A549 (cell line): ENCODE measurements at regions of chr16 and their contacts with region 1.

Region 1: DNA sequence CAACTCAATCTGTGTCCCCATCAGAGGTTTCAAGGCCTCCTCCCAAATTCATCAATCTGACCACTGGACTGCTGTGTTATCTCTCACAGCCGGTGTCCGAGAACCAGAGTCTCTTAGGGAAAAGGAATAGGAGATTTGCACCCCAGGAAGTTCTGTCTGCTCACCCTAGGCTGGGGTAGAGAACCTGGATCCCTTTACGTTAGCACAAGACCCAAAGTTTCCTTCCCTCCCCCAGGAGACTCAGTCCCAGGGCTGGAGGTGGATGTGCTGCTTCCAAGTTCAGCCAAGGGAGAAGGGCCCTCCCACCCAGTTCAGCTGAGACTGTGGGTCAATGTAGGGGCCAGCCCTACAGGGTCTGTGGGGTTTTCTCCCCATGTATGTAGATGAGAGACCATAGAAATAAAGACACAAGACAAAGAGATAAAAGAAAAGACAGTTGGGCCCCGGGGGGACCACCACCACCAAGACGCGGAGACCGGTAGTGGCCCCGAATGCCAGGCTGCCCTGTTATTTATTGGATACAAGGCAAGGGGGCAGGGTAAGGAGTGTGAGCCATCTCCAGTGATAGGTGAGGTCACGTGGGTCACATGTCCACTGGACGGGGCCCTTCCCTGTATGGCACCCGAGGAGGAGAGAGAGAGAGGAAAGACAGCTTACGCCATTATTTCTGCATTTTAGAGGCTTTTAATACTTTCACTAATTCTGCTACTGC is 22.7 kb upstream of the OR1F1 start:
- DNase-seq: no peak
- ATAC-seq: no peak
- H3K4me3 ChIP-seq: peak overlapping the region; percentile 26; the same call in 1 of the 3 replicates
- H3K27ac ChIP-seq: peak overlapping the region; percentile 76 to 81
- H3K4me1 ChIP-seq: peaks cover 3% of the 10 kb centered on the region; the same call in 2 of the 3 replicates
- CTCF ChIP-seq: no peak
- EP300 ChIP-seq: no peak
- POLR2A ChIP-seq: no peak
- RAD21 ChIP-seq: no peak

Region 2: DNA sequence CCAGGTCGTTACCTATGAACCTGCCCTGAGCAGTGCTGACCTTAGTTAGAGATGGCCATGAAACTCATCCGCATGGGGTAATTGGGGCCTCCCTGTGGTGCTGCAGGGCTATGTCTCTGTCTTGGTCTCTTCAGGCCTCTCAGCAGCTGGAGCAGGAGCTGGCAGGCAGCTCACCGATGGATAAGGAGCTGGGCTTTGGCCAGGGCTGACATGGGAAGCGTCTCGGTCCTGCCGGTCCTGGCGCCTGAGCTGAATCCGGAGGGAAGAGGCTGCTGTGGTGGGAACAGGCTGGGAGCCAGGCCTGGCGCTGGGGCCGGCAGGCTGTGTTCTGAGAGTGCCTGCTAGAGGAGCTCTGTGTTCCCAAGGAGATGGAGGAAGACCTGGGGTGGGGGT is 89.7 kb before region 1 on chr16:
- CTCF ChIA-PET with region 1: no interaction called
- POLR2A ChIA-PET with region 1: no interaction called
- DNase-seq: no peak
- ATAC-seq: no peak; a peak in 2 of 6 replicates
- H3K4me3 ChIP-seq: no peak overlapping the region
- H3K27ac ChIP-seq: no peak overlapping the region
- H3K4me1 ChIP-seq: no peaks in the 10 kb centered on the region
- CTCF ChIP-seq: no peak
- EP300 ChIP-seq: no peak
- POLR2A ChIP-seq: no peak
- RAD21 ChIP-seq: no peak

Region 3: DNA sequence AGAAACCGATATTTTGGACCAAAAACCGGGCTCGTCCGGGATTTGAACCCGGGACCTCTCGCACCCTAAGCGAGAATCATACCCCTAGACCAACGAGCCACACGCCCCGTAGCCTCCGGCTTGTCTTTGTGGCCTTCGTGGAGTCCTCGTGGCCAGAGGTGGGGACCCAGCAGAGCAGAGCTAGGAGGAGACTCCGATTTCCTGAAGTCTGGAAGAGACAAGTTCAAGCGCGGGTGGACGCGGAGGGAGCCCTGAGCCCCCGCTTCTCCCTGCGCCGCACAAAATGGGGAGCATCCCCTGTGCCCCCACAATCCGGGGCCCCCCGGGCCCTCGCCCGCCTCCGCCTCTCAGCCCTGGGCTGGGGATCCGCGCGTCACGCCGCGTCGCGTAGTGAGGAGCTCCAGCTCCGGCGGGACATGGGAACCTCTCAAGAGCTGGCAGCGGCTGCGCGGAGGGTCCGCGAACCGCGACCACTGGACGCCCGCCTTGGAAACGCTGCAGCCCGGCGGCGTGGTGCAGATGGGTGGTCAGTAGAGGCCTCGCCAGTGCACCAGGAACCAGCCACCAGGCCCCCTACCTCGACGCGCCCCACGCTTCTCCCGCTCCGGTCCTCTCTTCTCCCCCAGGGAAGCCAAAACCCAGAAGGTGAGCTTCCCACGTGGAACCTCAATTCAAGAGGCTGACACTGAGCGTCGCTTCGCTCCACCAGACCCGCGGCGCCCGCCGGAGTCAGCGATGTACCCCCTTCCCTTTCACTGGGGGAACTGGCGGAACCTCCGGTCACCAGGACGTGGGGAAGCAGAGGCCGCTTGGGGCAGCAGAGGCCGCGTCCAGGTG is 17.6 kb after region 1 on chr16:
- CTCF ChIA-PET with region 1: interaction called, 22 read pairs
- POLR2A ChIA-PET with region 1: interaction called, 6 read pairs
- DNase-seq: peak; percentile 67 to 88
- ATAC-seq: peak; percentile 69 to 73
- H3K4me3 ChIP-seq: peak overlapping the region; percentile 66
- H3K27ac ChIP-seq: peak overlapping the region; percentile 65 to 80
- H3K4me1 ChIP-seq: peaks cover 4% of the 10 kb centered on the region; the same call in 1 of the 3 replicates
- CTCF ChIP-seq: no peak; the same call in 2 of the 3 replicates
- EP300 ChIP-seq: no peak
- POLR2A ChIP-seq: no peak
- RAD21 ChIP-seq: peak; percentile 23 to 43; a peak in 4 of 5 replicates